HepG2 (cell line): ENCODE measurements at regions of chr12 and their contacts with region 1.

Region 1: GRCh38 chr12:14845350-14845750 is 2.0 kb upstream of the ART4 start:
- DNase-seq: peak; percentile 56
- ATAC-seq: no peak
- H3K4me3 ChIP-seq: no peak overlapping the region
- H3K27ac ChIP-seq: no peak overlapping the region
- H3K4me1 ChIP-seq: peaks cover 43% of the 10 kb centered on the region
- H3K27me3 ChIP-seq: no peaks in the 10 kb centered on the region; a peak in 1 of 5 replicates
- CTCF ChIP-seq: peak; percentile 75
- EP300 ChIP-seq: no peak
- POLR2A ChIP-seq: no peak
- RAD21 ChIP-seq: peak; percentile 65

Region 2: GRCh38 chr12:14723763-14724162 is 121.6 kb before region 1 on chr12:
- CTCF ChIA-PET with region 1: no interaction called
- POLR2A ChIA-PET with region 1: no interaction called
- in situ Hi-C with region 1: no loop called
- intact Hi-C with region 1: loop called (anchors 2 kb)
- DNase-seq: peak; percentile 54
- ATAC-seq: peak; percentile 96
- H3K4me3 ChIP-seq: no peak overlapping the region
- H3K27ac ChIP-seq: no peak overlapping the region
- H3K4me1 ChIP-seq: no peaks in the 10 kb centered on the region
- H3K27me3 ChIP-seq: no peaks in the 10 kb centered on the region
- CTCF ChIP-seq: peak; percentile 92
- EP300 ChIP-seq: no peak
- POLR2A ChIP-seq: no peak
- RAD21 ChIP-seq: peak; percentile 79

Region 3: DNA sequence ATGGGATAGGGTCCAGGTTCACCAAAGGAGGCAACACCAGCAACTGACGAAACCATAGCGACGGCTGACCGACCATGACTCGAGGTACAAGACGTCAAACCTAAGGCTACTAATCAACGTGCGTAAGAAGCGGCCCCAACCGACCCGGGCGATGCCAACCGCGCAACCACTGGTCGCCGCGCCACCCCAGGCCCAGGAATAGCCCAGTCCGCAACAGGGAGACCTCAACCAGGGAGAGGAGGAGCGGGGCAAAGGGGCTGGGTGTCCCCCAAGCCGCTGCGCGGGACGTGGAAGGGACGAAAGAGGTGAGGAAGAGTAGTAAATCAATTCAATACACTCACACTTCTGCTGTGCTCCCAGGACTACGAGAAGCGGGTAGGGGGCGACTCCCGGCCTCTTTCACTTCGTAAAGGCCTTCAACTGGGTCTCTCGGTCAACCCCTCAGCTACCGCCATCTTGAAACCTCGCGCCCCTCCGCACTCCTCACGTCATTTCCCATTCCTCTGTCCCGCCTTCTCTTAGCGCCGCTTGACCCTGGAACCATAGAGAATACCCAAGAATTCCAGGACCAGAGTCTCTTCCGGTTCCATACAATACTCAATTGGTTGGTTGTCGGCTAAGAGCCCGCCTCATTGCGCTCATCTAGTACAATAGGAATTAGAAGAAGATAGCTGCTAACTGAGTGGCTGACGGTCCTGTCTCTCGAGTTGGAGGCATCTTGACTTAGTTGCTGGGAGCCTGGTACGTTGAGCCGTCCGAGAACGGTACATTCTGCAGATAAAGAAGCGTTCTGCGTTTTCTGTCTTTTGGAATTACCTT is 42.1 kb before region 1 on chr12 and contains the starts of genes C12orf60 and WBP11:
- CTCF ChIA-PET with region 1: no interaction called
- POLR2A ChIA-PET with region 1: interaction called, 16 read pairs
- in situ Hi-C with region 1: no loop called
- intact Hi-C with region 1: loop called (anchors 2 kb)
- DNase-seq: peak; percentile 99
- ATAC-seq: peak; percentile 99
- H3K4me3 ChIP-seq: peak within 1 kb of the TSS; percentile 92 to 97 (median 96)
- H3K27ac ChIP-seq: peak within 1 kb of the TSS; percentile 83
- H3K4me1 ChIP-seq: peaks cover 33% of the 10 kb centered on the region
- H3K27me3 ChIP-seq: no peaks in the 10 kb centered on the region; a peak in 1 of 5 replicates
- CTCF ChIP-seq: peak; percentile 5; the same call in 1 of the 2 replicates
- EP300 ChIP-seq: no peak
- POLR2A ChIP-seq: peak; percentile 80 to 88
- RAD21 ChIP-seq: no peak
- total RNA-seq, gene C12orf60: 1.4 and 2.3 TPM in 2 replicates
- total RNA-seq, gene WBP11: 31.0 and 44.4 TPM in 2 replicates

Region 4: DNA sequence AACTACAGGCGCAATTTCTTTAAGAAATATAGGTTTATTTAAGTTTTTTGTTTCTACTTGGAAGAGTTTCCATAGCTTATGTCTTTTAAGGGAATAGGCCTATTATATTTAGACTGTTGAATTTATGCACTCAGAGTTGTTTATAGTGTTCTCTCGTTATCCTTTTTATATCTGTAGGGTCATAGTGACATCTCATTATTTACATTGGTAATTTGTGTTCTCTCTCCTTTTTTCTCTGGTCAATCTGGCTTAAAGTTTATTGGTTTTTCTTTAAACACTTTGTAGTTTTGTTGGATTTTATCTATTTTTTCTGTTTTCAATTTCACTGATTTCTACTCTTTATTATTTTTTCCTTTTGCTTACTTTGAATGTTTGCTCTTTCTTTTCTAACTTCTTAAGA is 25.3 kb before region 1 on chr12:
- CTCF ChIA-PET with region 1: no interaction called
- POLR2A ChIA-PET with region 1: no interaction called
- in situ Hi-C with region 1: no loop called
- intact Hi-C with region 1: no loop called
- DNase-seq: no peak
- ATAC-seq: no peak
- H3K4me3 ChIP-seq: no peak overlapping the region
- H3K27ac ChIP-seq: no peak overlapping the region
- H3K4me1 ChIP-seq: no peaks in the 10 kb centered on the region
- H3K27me3 ChIP-seq: no peaks in the 10 kb centered on the region
- CTCF ChIP-seq: no peak
- EP300 ChIP-seq: no peak
- POLR2A ChIP-seq: no peak
- RAD21 ChIP-seq: no peak

Region 5: GRCh38 chr12:14892726-14893505 is 47.6 kb after region 1 on chr12:
- CTCF ChIA-PET with region 1: no interaction called
- POLR2A ChIA-PET with region 1: interaction called, 4 read pairs
- in situ Hi-C with region 1: no loop called
- intact Hi-C with region 1: loop called (anchors 2 kb)
- DNase-seq: peak; percentile 5
- ATAC-seq: peak; percentile 81
- H3K4me3 ChIP-seq: no peak overlapping the region
- H3K27ac ChIP-seq: no peak overlapping the region
- H3K4me1 ChIP-seq: no peaks in the 10 kb centered on the region
- H3K27me3 ChIP-seq: no peaks in the 10 kb centered on the region
- CTCF ChIP-seq: peak; percentile 49
- EP300 ChIP-seq: no peak
- POLR2A ChIP-seq: no peak
- RAD21 ChIP-seq: no peak

Region 6: GRCh38 chr12:14995583-14996425 is 150.5 kb after region 1 on chr12:
- CTCF ChIA-PET with region 1: interaction called, 21 read pairs
- POLR2A ChIA-PET with region 1: no interaction called
- in situ Hi-C with region 1: loop called (anchors 5 kb)
- intact Hi-C with region 1: loop called (anchors 1 kb)
- DNase-seq: peak; percentile 52
- ATAC-seq: no peak
- H3K4me3 ChIP-seq: no peak overlapping the region
- H3K27ac ChIP-seq: no peak overlapping the region
- H3K4me1 ChIP-seq: no peaks in the 10 kb centered on the region
- H3K27me3 ChIP-seq: peaks cover 0 to 2% of the 10 kb centered on the region in 2 experiments; a peak in 1 of 5 replicates
- CTCF ChIP-seq: peak; percentile 63
- EP300 ChIP-seq: no peak
- POLR2A ChIP-seq: no peak
- RAD21 ChIP-seq: no peak